Activated CD4-positive, alpha-beta T cell treated with anti-CD3 and anti-CD28 coated beads for 36 hours (primary cell): ENCODE measurements at regions of chrX and their contacts with region 1.

Region 1: DNA sequence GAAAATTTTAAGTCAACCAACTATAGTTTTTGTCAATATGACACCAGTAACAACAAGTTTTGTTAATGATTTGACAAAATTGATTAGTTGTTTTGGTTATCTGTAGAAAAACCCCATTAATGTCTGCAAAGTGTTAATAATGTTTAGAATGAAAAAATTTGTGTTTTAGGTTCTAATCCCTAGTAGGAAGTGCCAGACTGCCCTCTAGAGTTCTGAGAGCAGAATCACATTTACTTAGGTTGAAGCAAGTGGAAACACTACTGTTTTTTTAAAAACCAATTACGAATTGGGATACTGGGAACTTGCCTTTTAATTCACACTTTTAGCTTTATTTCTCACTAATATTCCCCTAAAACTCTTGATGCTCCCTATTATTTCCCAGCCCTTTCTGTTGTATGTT is 101.1 kb upstream of the CYLC1 start:
- DNase-seq: no peak
- ATAC-seq: no peak
- H3K4me3 Mint-ChIP-seq: no peak overlapping the region
- H3K27ac Mint-ChIP-seq: no peak overlapping the region
- H3K4me1 Mint-ChIP-seq: no peaks in the 10 kb centered on the region
- H3K27me3 Mint-ChIP-seq: no peaks in the 10 kb centered on the region

Region 2: DNA sequence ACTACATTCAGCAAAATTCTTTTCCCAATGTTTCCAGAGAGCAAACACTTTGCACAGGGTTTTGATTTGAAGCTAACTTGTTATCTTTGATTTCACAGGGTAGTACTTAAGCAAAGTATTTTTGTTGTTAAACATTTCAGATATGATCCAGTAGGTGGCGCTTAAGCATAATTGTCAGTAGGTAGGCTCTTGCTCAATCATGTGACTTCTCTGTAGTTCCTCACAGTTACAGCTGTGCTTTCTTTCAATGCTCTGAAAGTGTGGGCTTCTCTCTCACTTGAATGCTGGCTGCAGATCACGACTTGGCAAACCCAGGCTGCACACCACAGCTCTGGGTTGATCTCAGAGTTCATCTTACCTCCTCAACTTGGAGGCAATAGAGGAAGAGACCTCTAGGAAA is 1541.5 kb before region 1 on chrX:
- CTCF ChIA-PET with region 1: no interaction called
- POLR2A ChIA-PET with region 1: no interaction called
- intact Hi-C with region 1: loop called in 1 of 2 experiments (anchors 2 kb)
- DNase-seq: no peak
- ATAC-seq: no peak
- H3K4me3 Mint-ChIP-seq: no peak overlapping the region
- H3K27ac Mint-ChIP-seq: no peak overlapping the region
- H3K4me1 Mint-ChIP-seq: no peaks in the 10 kb centered on the region
- H3K27me3 Mint-ChIP-seq: no peaks in the 10 kb centered on the region

Region 3: DNA sequence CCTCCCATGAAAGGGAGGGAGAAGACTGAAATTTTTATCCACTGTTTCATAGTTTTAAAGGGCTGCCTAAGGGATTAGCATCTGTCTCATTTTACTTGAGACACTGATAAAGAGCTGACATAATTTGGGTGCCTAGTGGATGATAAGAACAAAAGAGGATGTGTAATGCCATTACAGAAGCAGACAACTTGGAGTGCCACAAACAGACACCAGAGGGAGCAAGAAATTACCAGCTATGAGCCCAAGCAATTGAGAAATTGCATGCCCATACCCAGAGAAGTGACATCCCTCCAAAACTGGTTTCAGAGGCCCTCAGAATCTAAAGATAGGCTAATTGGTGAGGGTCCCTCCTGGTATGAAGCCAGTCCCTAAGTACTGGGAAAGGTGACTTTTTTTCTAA is 290.3 kb before region 1 on chrX:
- CTCF ChIA-PET with region 1: no interaction called
- POLR2A ChIA-PET with region 1: no interaction called
- intact Hi-C with region 1: loop called in 1 of 2 experiments (anchors 10 kb)
- DNase-seq: peak; percentile 8
- ATAC-seq: no peak
- H3K4me3 Mint-ChIP-seq: no peak overlapping the region
- H3K27ac Mint-ChIP-seq: no peak overlapping the region
- H3K4me1 Mint-ChIP-seq: no peaks in the 10 kb centered on the region
- H3K27me3 Mint-ChIP-seq: no peaks in the 10 kb centered on the region

Region 4: GRCh38 chrX:83630662-83631061 is 129.2 kb before region 1 on chrX:
- CTCF ChIA-PET with region 1: no interaction called
- POLR2A ChIA-PET with region 1: no interaction called
- intact Hi-C with region 1: no loop called
- DNase-seq: no peak
- ATAC-seq: no peak
- H3K4me3 Mint-ChIP-seq: no peak overlapping the region
- H3K27ac Mint-ChIP-seq: no peak overlapping the region
- H3K4me1 Mint-ChIP-seq: peaks cover 4% of the 10 kb centered on the region
- H3K27me3 Mint-ChIP-seq: peaks cover 3% of the 10 kb centered on the region